Left ventricle myocardium superior (tissue), 1 donor: ENCODE measurements at regions of chr3 and their contacts with region 1.

Region 1: GRCh38 chr3:44529927-44530326 is 25.1 kb upstream of the ZKSCAN7 start:
- DNase-seq: no peak
- ATAC-seq: no peak

Region 2: GRCh38 chr3:44596621-44597020 is 66.7 kb after region 1 on chr3:
- intact Hi-C with region 1: no loop called
- DNase-seq: no peak
- ATAC-seq: no peak

Region 3: GRCh38 chr3:44913868-44914468 is 384.0 kb after region 1 on chr3:
- intact Hi-C with region 1: loop called (anchors 5 kb)
- DNase-seq: peak; percentile 83
- ATAC-seq: peak; percentile 73